Right ventricle myocardium superior (tissue), 1 donor: ENCODE measurements at regions of chr19 and their contacts with region 1.

Region 1: DNA sequence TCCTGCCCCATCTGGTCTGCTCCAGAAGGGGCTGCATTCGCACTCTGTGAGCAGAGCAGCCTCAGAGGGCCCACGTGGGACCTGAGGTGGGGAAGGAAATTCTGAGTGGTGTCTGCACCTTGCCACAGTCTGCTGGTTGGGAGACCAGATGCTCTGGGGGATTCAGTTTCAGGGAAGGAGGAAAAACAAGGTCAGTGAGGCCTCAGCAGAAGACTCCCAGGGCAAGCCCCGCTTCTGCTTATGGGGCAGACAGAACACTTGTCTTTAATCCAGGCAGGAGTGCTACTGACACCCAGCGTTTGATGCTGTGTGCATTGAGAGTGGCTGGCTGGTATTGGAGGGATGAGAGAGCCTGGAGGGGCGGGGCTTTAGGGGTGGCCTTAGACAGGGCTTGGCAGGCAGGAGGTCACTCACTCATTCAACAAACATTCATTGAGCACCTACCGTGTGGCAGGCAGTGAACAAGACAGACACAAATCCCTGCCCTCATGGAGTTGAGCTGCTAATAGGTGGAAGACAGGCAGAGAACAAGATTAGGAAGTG is 4.9 kb upstream of the CLEC17A start:
- DNase-seq: no peak
- ATAC-seq: no peak

Region 2: DNA sequence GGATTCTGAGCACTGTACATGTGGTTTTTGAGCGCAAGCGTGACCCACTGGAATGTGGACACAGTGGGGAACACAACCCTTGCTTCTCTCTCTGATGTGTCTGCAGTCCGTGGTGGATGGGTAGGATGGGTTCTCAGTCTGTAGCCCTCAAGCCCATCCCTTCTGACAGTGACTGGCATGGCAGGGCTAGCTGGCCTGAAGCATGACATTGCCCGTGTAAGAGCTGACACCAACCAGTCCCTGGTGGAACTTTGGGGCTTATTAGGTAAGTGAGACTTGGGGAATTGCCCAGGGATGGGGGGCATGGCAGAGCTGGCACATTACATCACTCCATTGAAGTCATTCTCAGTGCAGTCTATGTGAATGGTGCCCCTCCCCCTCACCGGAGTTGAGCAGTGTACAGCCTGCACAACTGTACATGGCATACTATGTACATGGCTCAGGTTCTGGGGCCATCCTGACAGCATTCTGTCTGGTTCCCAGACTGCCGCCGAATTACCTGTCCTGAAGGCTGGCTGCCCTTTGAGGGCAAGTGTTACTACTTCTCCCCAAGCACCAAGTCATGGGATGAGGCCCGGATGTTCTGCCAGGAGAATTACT is 21.7 kb after region 1 on chr19:
- intact Hi-C with region 1: no loop called
- DNase-seq: no peak
- ATAC-seq: no peak

Region 3: GRCh38 chr19:14639536-14640277 is 61.8 kb after region 1 on chr19:
- intact Hi-C with region 1: no loop called
- DNase-seq: no peak
- ATAC-seq: no peak

Region 4: DNA sequence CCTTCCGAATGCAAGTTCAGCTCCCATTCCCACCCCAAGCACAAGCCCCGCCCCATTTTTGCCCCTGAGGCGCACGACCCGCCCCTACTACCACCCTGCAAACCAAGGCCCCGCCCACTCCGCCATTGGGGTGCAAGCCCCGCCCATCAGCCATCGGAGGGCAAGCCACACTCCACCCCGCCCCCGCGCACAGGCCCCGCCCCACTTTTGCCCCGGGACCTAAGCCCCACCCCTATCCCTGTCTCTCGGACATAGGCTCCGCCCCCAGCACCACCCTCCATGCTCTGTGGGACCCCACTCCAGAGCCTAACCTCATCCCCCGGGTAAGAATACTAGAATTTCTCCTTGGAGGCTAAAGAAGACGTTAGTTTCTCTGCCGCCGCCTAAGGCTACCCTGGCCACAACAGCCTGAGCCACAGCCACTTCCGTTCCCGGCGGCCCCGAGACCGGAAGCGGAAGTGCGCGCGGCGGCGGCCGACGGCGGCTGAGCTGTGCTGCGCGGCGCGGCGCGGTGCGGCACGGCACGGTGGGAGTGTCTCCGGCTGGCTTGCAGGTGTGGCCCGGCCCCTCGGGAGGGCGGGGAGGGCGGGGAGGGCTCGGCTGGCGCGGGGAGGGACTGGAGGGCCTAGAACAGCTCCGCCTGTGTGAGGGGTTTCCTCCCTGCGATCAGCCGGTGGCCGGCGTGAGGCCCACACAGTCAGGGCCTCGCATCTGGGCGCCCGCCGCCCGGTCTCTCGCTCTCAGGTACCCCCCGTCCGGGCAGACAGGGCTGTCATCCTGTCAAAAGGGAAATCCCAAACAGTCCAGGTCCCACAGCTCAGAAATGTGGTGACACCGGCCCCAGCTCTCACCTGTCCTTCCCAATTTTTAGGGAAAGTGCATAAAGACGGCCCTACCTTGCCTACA is 111.9 kb after region 1 on chr19 and contains the start of gene ZNF333:
- intact Hi-C with region 1: loop called (anchors 5 kb)
- DNase-seq: peak; percentile 99
- ATAC-seq: peak; percentile 99
- total RNA-seq, gene ZNF333: 7.0 TPM